ENCODE measurements at regions of chr13 and their contacts with region 1.

Region 1: DNA sequence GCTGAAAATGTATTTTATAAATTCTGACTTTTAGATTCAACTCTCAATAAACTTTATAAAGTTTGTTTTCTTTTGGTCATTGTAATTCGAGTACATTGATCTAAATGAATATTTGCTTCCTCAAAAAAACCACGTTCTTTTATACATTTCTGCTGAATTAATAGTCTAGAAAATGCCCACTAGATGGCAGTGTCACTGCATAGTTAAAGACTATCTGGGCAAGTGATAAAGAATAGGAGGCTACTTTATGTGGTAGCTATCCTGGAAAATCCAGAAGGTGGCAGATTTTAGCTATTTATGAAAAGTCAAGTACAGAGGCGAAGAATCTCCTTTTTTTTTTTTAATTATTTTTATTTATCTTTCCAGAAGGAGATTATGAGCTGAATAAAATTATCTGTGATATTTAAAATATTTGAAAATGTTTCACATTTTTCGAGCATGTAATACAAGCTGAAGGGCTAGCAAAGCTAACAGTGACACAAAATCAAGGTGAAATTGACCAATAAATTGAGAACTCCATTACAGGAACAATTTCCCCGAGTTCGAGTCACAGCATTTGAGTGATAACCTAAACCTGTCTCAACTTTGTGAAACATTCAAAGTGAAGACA is 221.8 kb downstream of the OLFM4 start:
- DNase-seq: no peak
- H3K4me3 ChIP-seq: no peak overlapping the region
- H3K27ac ChIP-seq: no peak overlapping the region
- H3K4me1 ChIP-seq: no peaks in the 10 kb centered on the region
- H3K27me3 ChIP-seq: no peaks in the 10 kb centered on the region; a peak in 1 of 7 replicates
- CTCF ChIP-seq: peak in 2 of 3 experiments; percentile 76 to 95; a peak in 3 of 4 replicates
- EP300 ChIP-seq: no peak
- POLR2A ChIP-seq: no peak
- RAD21 ChIP-seq: peak; percentile 97 to 98

Region 2: DNA sequence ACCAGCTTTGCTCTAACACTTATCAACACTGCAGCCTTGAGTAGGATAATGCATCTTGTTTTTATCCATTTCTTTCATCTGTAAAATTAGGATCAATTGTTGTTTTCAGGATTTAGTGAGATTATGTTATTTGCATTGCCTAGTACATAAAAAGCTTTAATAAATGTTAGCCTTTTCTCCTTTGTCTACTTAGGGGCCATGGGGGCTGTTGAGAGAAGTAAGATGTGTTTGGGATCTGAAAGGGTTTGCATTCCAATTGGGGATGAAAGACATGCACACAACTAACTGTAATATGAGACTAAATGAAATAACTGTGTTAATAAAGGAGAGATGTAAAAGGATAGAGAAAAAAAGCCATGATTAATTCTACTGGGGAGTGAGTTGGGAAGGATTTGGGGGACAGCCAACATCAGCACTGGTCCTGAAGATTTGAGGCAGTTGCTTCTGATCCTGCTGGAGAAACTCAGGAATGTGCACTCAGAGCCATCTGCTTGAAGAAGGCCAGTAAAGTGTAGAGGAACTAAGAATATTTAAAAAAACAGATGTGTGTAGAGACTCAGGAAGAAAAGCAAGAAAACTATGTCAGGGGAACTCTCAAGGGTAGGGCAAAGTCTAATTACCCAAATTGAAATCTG is 14.5 kb after region 1 on chr13:
- CTCF ChIA-PET with region 1: interaction called, 15 read pairs
- POLR2A ChIA-PET with region 1: no interaction called
- DNase-seq: no peak
- H3K4me3 ChIP-seq: no peak overlapping the region
- H3K27ac ChIP-seq: no peak overlapping the region
- H3K4me1 ChIP-seq: peaks cover 0 to 8% (median 3%) of the 10 kb centered on the region in 4 experiments; a peak in 5 of 7 replicates
- H3K27me3 ChIP-seq: peaks cover 0 to 6% (median 4%) of the 10 kb centered on the region in 4 experiments; a peak in 5 of 7 replicates
- CTCF ChIP-seq: no peak
- EP300 ChIP-seq: no peak
- POLR2A ChIP-seq: no peak
- RAD21 ChIP-seq: no peak

Region 3: DNA sequence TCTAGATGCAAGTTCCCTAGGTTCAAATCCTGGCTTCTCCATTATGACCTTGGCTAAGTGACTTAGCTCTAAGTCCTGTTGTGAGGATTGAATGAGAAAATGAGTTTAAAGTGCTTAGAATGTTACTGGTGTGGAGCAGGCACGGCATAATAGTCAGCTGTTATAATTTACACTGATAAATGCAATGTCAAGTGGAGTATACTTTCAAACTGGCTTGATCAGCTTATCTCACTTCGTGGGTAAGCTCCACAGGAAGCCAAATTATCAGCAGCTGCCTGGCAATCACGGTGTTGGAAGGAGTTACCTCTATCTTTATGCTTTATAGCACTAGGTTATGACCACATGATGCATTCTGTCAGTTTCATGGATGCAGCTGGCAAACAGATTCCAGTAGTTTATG is 51.1 kb after region 1 on chr13:
- CTCF ChIA-PET with region 1: no interaction called
- POLR2A ChIA-PET with region 1: no interaction called
- DNase-seq: no peak
- H3K4me3 ChIP-seq: no peak overlapping the region
- H3K27ac ChIP-seq: no peak overlapping the region
- H3K4me1 ChIP-seq: no peaks in the 10 kb centered on the region
- H3K27me3 ChIP-seq: no peaks in the 10 kb centered on the region
- CTCF ChIP-seq: no peak
- EP300 ChIP-seq: no peak
- POLR2A ChIP-seq: no peak
- RAD21 ChIP-seq: no peak

Region 4: GRCh38 chr13:53311561-53311960 is 61.2 kb after region 1 on chr13:
- CTCF ChIA-PET with region 1: interaction called, 18 read pairs
- POLR2A ChIA-PET with region 1: no interaction called
- DNase-seq: no peak
- H3K4me3 ChIP-seq: no peak overlapping the region
- H3K27ac ChIP-seq: no peak overlapping the region
- H3K4me1 ChIP-seq: peaks cover 0 to 5% (median 2%) of the 10 kb centered on the region in 4 experiments; a peak in 1 of 7 replicates
- H3K27me3 ChIP-seq: peaks cover 0 to 6% (median 0%) of the 10 kb centered on the region in 4 experiments; a peak in 4 of 7 replicates
- CTCF ChIP-seq: peak in 1 of 3 experiments; percentile 36; a peak in 2 of 4 replicates
- EP300 ChIP-seq: no peak
- POLR2A ChIP-seq: no peak
- RAD21 ChIP-seq: no peak; a peak in 1 of 4 replicates

Region 5: GRCh38 chr13:53405616-53406015 is 155.2 kb after region 1 on chr13:
- CTCF ChIA-PET with region 1: interaction called, 26 read pairs
- POLR2A ChIA-PET with region 1: no interaction called
- DNase-seq: peak; percentile 13 to 51
- H3K4me3 ChIP-seq: no peak overlapping the region
- H3K27ac ChIP-seq: no peak overlapping the region
- H3K4me1 ChIP-seq: no peaks in the 10 kb centered on the region
- H3K27me3 ChIP-seq: no peaks in the 10 kb centered on the region
- CTCF ChIP-seq: peak; percentile 46 to 78 (median 73)
- EP300 ChIP-seq: no peak
- POLR2A ChIP-seq: no peak
- RAD21 ChIP-seq: peak; percentile 68 to 75